ENCODE measurements at regions of chr19 and their contacts with region 1.

Region 1: GRCh38 chr19:45496349-45496953 is 396 bp downstream of the RTN2 start:
- DNase-seq: no peak
- ATAC-seq: peak; percentile 16
- H3K4me3 ChIP-seq: peak overlapping the region; percentile 64 to 83 (median 79); a peak in 5 of 6 replicates
- H3K27ac ChIP-seq: no peak overlapping the region
- H3K4me1 ChIP-seq: peaks cover 51% of the 10 kb centered on the region
- H3K27me3 ChIP-seq: no peaks in the 10 kb centered on the region; a peak in 1 of 5 replicates
- CTCF ChIP-seq: no peak
- EP300 ChIP-seq: no peak
- POLR2A ChIP-seq: no peak
- RAD21 ChIP-seq: no peak

Region 2: DNA sequence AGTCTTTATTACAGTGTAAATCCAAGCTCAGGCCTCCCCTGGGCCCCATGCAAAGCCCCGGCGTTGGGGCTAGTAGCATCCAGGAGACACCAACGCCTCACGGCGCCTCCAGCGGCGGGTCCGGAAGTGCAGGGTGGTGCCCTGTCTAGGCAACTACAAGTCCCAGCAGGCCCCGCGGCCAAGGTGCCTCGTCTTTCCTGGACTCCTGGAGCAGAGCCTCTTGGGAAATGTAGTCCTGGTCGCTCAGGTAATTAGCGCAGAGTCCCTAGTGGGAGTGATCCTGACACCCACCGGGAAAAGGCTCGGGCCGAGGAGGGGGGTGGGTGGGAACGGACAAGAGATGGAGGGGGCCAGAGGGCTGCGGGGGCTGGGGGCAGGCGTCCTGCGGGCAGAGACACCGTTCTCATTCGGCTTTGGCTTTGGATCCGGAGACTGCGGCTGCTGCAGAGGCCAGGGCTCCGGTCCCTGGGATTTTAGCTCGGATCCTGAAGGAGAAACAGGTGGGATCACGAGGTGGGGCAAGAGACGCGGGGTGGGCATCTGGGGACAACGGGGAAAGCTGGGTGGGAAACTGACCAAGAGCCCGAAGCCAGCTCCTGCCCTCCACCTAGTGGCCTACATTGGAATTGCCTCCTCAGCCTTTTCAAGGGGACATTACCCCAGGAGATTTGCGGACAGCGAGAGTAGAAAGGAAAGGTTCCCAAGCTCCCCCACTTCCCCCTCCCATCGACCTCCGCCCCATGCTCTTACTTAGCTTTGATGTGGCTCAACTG is 11.0 kb before region 1 on chr19:
- CTCF ChIA-PET with region 1: interaction called, 4 read pairs
- POLR2A ChIA-PET with region 1: interaction called, 3 read pairs
- in situ Hi-C with region 1: no loop called
- intact Hi-C with region 1: loop called (anchors 1 kb)
- DNase-seq: peak; percentile 93
- ATAC-seq: peak; percentile 97
- H3K4me3 ChIP-seq: peak overlapping the region; percentile 66 to 88 (median 76)
- H3K27ac ChIP-seq: peak overlapping the region; percentile 36
- H3K4me1 ChIP-seq: peaks cover 25% of the 10 kb centered on the region
- H3K27me3 ChIP-seq: peaks cover 0 to 6% of the 10 kb centered on the region in 2 experiments; a peak in 2 of 5 replicates
- CTCF ChIP-seq: peak; percentile 89
- EP300 ChIP-seq: peak in 1 of 2 experiments; percentile 4; a peak in 1 of 4 replicates
- POLR2A ChIP-seq: no peak
- RAD21 ChIP-seq: peak; percentile 29; the same call in 1 of the 2 replicates

Region 3: DNA sequence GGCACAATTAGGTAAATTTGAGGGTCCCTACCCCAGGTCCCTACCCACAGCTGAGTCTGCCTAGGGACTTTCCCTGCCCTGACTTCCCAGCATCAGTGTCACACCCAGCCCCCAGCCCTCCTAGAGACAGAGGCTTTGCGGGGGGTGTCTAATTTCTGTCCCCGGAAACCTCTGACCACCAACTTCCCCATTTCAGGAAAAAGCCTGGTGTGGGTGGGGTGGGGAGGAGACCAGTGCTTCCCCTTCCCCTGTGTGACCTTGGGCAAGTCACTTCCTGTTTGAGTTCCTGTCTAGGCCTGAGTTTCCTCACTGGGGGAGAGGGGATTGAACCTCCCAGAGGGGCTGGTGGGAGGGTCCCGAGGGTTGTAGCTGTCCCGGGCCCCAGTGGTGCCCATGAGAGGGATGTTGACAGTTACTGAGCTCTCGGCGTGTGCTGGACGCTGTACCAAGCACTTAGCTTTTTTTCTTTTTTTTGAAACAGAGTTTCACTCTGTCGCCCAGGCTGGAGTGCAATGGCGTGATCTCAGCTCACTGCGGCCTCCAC is 18.7 kb after region 1 on chr19:
- CTCF ChIA-PET with region 1: no interaction called
- POLR2A ChIA-PET with region 1: interaction called, 3 read pairs
- in situ Hi-C with region 1: no loop called
- intact Hi-C with region 1: loop called (anchors 2 kb)
- DNase-seq: peak; percentile 54
- ATAC-seq: peak; percentile 24
- H3K4me3 ChIP-seq: no peak overlapping the region
- H3K27ac ChIP-seq: peak overlapping the region; percentile 76
- H3K4me1 ChIP-seq: peaks cover 83% of the 10 kb centered on the region
- H3K27me3 ChIP-seq: no peaks in the 10 kb centered on the region
- CTCF ChIP-seq: no peak
- EP300 ChIP-seq: 0 out of 4 replicates have a peak, but pooled peaks of 1 of the 2 experiments have one; percentile 15
- POLR2A ChIP-seq: 0 out of 4 replicates have a peak, but pooled peaks of 1 of the 2 experiments have one; percentile 7
- RAD21 ChIP-seq: no peak

Measured in HepG2 (cell line).